HCT116 (cell line): ENCODE measurements at regions of chr15 and their contacts with region 1.

Region 1: GRCh38 chr15:37709669-37710068 is 224.8 kb upstream of the TMCO5A start:
- DNase-seq: no peak
- ATAC-seq: no peak
- H3K4me3 ChIP-seq: no peak overlapping the region
- H3K27ac ChIP-seq: no peak overlapping the region
- H3K4me1 ChIP-seq: no peaks in the 10 kb centered on the region
- H3K27me3 ChIP-seq: no peaks in the 10 kb centered on the region
- CTCF ChIP-seq: no peak
- POLR2A ChIP-seq: no peak
- RAD21 ChIP-seq: no peak

Region 2: DNA sequence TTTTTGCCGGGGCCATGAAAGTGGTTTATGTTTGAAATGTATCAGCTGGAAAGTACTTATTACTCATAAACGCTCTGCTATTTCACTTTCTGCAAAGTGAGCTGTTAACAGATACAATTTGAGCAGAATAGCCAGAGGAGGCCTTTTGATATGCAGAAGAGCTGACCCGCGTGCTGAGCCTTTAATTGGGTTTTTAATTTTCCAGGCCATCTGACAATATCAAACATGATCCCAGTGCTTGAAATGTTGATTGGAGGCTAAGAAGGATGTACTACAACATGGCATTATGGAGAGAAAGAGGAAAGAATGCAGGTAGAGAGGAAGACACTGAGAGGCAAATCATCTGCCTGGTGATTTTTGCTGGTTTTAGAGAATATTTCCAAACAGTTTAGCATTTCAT is 348.0 kb before region 1 on chr15:
- CTCF ChIA-PET with region 1: no interaction called
- POLR2A ChIA-PET with region 1: no interaction called
- RAD21 ChIA-PET with region 1: no interaction called
- intact Hi-C with region 1: loop called (anchors 10 kb)
- DNase-seq: no peak
- ATAC-seq: no peak
- H3K4me3 ChIP-seq: no peak overlapping the region
- H3K27ac ChIP-seq: no peak overlapping the region
- H3K4me1 ChIP-seq: no peaks in the 10 kb centered on the region
- H3K27me3 ChIP-seq: peaks cover 7% of the 10 kb centered on the region; the same call in 1 of the 2 replicates
- CTCF ChIP-seq: no peak
- POLR2A ChIP-seq: no peak
- RAD21 ChIP-seq: no peak